ENCODE measurements at regions of chr10 and their contacts with region 1.

Region 1: DNA sequence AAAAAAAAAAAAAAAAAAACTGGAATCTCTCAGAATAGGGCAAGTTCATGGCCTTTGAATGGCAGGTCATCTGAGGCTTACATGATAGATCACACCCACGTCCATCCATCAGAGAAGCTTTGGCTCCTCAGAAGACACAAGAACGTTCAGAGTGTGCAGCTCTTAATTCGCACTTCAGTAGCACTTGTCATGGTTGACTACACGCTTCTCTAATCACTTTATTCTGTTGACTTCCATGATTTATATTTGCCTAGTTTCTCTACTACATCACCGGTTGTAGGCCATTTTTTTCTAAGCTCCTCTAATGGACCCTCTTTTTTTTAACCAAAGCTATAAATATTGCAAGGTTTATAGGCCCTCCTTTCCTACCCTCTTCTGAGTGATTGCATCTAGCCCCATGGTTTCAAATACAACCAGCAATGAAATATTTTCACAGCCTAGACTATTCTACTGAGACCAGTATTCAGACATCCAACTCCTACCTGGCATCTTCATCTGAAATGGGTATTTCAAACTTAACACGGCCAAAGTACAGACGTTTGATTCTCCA is 305.4 kb upstream of the CELF2 start:
- DNase-seq: no peak
- ATAC-seq: no peak
- H3K4me3 ChIP-seq: no peak overlapping the region
- H3K27ac ChIP-seq: no peak overlapping the region
- H3K4me1 ChIP-seq: no peaks in the 10 kb centered on the region
- H3K27me3 ChIP-seq: no peaks in the 10 kb centered on the region
- CTCF ChIP-seq: no peak

Region 2: GRCh38 chr10:10745291-10745690 is 33.1 kb after region 1 on chr10:
- CTCF ChIA-PET with region 1: no interaction called
- POLR2A ChIA-PET with region 1: interaction called, 13 read pairs
- intact Hi-C with region 1: no loop called
- DNase-seq: no peak
- ATAC-seq: no peak
- H3K4me3 ChIP-seq: no peak overlapping the region
- H3K27ac ChIP-seq: no peak overlapping the region
- H3K4me1 ChIP-seq: no peaks in the 10 kb centered on the region
- H3K27me3 ChIP-seq: no peaks in the 10 kb centered on the region
- CTCF ChIP-seq: no peak

Measured in PC-3 (cell line).